HCT116 (cell line): ENCODE measurements at regions of chr6 and their contacts with region 1.

Region 1: GRCh38 chr6:140289186-140289585 is 914.7 kb upstream of the CITED2 start:
- DNase-seq: no peak
- ATAC-seq: no peak
- H3K4me3 ChIP-seq: no peak overlapping the region
- H3K27ac ChIP-seq: no peak overlapping the region
- H3K4me1 ChIP-seq: no peaks in the 10 kb centered on the region
- H3K27me3 ChIP-seq: no peaks in the 10 kb centered on the region
- CTCF ChIP-seq: no peak
- POLR2A ChIP-seq: no peak
- RAD21 ChIP-seq: no peak

Region 2: GRCh38 chr6:140269591-140270165 is 19.5 kb before region 1 on chr6:
- CTCF ChIA-PET with region 1: no interaction called
- POLR2A ChIA-PET with region 1: no interaction called
- RAD21 ChIA-PET with region 1: no interaction called
- intact Hi-C with region 1: loop called (anchors 2 kb)
- DNase-seq: no peak
- ATAC-seq: no peak
- H3K4me3 ChIP-seq: no peak overlapping the region
- H3K27ac ChIP-seq: no peak overlapping the region
- H3K4me1 ChIP-seq: no peaks in the 10 kb centered on the region
- H3K27me3 ChIP-seq: no peaks in the 10 kb centered on the region
- CTCF ChIP-seq: no peak
- POLR2A ChIP-seq: no peak
- RAD21 ChIP-seq: no peak

Region 3: DNA sequence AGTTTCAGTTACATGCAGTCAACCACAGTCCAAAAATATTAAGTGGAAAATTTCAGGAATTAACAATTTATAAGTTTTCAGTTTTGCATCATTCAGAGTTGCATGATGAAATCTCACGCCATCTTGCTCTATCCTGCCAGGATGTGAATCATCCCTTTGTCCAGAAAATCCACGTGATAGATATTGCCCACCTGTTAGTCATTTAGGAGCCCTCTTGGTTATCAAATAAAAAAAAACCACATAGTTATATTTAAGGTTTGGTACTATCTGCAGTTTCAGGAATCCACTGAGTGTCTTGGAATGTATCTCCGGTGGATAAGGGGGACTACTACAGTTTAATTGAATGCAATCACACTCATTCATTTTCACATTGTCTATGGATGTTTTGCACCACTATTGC is 334.3 kb after region 1 on chr6:
- CTCF ChIA-PET with region 1: no interaction called
- POLR2A ChIA-PET with region 1: no interaction called
- RAD21 ChIA-PET with region 1: no interaction called
- intact Hi-C with region 1: no loop called
- DNase-seq: peak; percentile 56
- ATAC-seq: no peak
- H3K4me3 ChIP-seq: no peak overlapping the region
- H3K27ac ChIP-seq: no peak overlapping the region
- H3K4me1 ChIP-seq: no peaks in the 10 kb centered on the region
- H3K27me3 ChIP-seq: no peaks in the 10 kb centered on the region
- CTCF ChIP-seq: no peak
- POLR2A ChIP-seq: no peak
- RAD21 ChIP-seq: no peak